ENCODE measurements at regions of chr17 and their contacts with region 1.

Region 1: DNA sequence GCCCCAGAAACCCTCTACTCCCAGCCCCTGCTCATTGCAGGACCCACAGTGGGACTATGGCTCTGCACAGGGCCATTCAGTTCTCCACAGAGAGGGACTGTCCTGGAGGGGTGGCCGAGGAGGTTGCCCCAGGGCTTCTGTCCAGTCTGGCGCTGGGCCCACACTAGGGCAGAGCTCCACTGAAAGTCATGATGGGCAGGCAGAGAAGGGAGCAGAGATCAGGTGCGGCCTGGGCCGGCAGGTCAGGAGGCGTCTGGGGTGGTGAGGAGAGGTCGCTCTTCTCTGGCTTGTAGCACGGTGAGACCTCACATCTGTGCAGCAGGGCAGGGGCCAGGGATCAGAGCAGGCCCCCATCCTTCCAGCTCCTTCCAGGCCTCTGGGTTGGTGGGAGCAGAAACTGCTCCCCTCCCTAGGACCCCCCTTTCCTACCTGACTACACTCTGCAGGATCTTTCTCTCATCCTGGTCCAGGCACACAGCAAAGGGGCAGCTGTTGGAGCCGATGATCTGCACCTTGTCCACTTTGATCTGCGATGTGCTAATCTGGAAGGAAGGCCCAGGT is 13.1 kb upstream of the PIK3R6 start:
- DNase-seq: no peak
- H3K4me3 ChIP-seq: no peak overlapping the region
- H3K27ac ChIP-seq: no peak overlapping the region
- H3K4me1 ChIP-seq: no peaks in the 10 kb centered on the region
- H3K27me3 ChIP-seq: no peaks in the 10 kb centered on the region
- CTCF ChIP-seq: no peak
- POLR2A ChIP-seq: no peak

Region 2: DNA sequence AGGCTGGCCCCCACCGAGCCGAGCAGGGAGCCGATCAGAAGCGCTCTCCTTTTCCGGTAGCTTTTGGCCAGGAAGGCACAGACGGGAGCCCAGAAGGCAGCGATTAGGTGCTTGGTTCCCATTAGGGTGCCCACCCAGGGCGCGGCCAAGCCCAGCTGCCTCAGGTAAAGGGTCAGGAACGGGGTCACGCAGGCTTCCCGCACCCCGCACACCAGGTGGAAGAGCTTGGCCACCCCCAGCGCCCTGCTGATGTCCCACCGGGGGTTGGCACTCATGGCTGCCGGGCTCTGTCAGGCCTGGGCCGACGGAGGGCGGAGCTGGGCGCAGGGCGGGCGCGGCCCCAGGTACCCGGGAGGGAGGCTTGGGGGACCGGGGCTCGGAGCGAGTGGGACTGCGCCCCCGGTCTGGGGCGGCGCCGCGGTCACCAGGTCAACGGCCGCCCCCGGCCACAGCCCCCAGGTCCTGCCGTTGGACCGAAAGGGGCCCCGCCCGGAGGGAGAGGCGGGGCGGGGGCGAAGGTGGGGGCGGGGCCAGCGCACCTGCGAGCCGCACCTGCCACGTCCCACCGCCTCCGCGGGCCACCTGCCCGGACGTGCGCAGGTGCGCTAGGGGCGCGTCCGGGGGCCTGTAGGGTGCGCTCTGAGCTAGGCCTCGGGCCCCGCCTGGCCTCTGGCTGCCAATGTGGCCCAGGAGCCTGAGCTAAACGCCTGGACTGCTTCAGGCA is 81.5 kb before region 1 on chr17 and contains the start of gene MFSD6L:
- intact Hi-C with region 1: no loop called
- DNase-seq: no peak
- H3K4me3 ChIP-seq: no peak within 1 kb of the TSS
- H3K27ac ChIP-seq: no peak within 1 kb of the TSS
- H3K4me1 ChIP-seq: no peaks in the 10 kb centered on the region
- H3K27me3 ChIP-seq: peaks cover 8% of the 10 kb centered on the region
- CTCF ChIP-seq: no peak
- POLR2A ChIP-seq: no peak
- total RNA-seq, gene MFSD6L: 0.06 to 0.15 (median 0.11) TPM in 3 of 9 donors, not detected in the others

Region 3: DNA sequence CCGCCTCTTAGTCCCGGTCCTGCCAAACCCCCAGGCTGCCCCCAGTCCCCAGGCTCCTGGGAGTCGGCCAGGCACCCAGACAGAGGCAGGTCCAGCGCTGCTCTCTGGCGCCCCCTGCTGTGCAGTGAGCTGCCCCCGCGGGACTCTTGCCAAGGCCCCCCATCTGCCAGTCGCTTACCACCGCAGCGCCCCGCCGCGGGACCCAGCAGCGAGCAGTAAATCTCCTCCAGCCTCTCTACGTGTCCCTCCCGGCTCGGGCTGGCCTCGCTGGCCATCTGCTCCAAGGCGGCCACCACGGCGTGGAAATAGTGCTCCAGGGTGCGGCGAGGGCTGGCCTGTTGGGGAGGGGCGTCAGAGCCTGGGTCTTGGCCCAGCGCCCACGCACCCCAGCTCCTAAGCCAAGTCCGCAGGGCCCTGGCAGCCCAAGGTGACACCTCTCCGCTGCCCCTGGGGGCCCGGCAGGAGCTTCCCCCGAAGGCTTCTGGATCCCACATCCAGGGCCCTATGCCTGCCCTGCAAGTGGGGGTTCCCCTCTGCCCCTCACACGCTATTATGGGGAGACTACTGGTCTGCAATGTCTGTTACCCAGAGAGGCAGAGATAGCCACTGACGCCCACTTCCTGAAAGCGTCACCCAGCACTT is 47.7 kb before region 1 on chr17:
- intact Hi-C with region 1: loop called in 1 of 2 experiments (anchors 5 kb)
- DNase-seq: no peak
- H3K4me3 ChIP-seq: no peak overlapping the region
- H3K27ac ChIP-seq: no peak overlapping the region
- H3K4me1 ChIP-seq: no peaks in the 10 kb centered on the region
- H3K27me3 ChIP-seq: peaks cover 7% of the 10 kb centered on the region
- CTCF ChIP-seq: peak in 1 of 6 experiments; percentile 22
- POLR2A ChIP-seq: no peak

Region 4: DNA sequence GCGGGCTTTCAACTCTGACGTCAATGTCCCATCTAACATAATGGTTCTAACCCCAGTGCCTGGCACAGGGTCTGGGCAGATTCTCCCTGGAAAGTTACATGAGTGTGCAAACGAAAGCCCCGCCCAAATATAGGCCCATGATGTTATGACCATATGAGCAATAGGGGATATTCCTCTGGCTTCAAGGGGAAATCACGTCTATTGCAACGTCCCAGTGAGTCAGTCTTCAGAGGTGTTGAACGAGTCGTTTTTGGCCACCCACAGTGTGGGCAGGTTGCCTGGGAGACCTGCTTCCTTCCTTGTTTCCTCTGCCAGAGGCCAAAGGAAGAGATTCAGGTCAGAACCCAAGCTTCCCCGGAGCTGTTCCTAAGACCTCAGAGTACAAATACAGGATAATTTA is 54.6 kb after region 1 on chr17:
- intact Hi-C with region 1: no loop called
- DNase-seq: peak in 3 of 7 donors; percentile 29 to 41 (median 34)
- H3K4me3 ChIP-seq: no peak overlapping the region
- H3K27ac ChIP-seq: peak overlapping the region in 1 of 5 donors; percentile 40
- H3K4me1 ChIP-seq: no peaks in the 10 kb centered on the region
- H3K27me3 ChIP-seq: no peaks in the 10 kb centered on the region
- CTCF ChIP-seq: no peak
- POLR2A ChIP-seq: no peak